PC-9 (cell line): ENCODE measurements at regions of chr7 and their contacts with region 1.

Region 1: GRCh38 chr7:74094224-74095101 is 10.9 kb downstream of the LIMK1 start:
- DNase-seq: peak; percentile 92 to 94
- H3K4me3 ChIP-seq: peak overlapping the region; percentile 41; the same call in 1 of the 2 replicates
- H3K27ac ChIP-seq: peak overlapping the region; percentile 78
- H3K4me1 ChIP-seq: peaks cover 38% of the 10 kb centered on the region
- H3K27me3 ChIP-seq: no peaks in the 10 kb centered on the region
- CTCF ChIP-seq: no peak

Region 2: GRCh38 chr7:74059681-74060578 is 34.5 kb before region 1 on chr7:
- CTCF ChIA-PET with region 1: no interaction called
- POLR2A ChIA-PET with region 1: interaction called, 12 read pairs
- intact Hi-C with region 1: no loop called
- DNase-seq: peak; percentile 76 to 95
- H3K4me3 ChIP-seq: no peak overlapping the region
- H3K27ac ChIP-seq: no peak overlapping the region
- H3K4me1 ChIP-seq: peaks cover 17% of the 10 kb centered on the region
- H3K27me3 ChIP-seq: peaks cover 5% of the 10 kb centered on the region; the same call in 1 of the 2 replicates
- CTCF ChIP-seq: no peak

Region 3: DNA sequence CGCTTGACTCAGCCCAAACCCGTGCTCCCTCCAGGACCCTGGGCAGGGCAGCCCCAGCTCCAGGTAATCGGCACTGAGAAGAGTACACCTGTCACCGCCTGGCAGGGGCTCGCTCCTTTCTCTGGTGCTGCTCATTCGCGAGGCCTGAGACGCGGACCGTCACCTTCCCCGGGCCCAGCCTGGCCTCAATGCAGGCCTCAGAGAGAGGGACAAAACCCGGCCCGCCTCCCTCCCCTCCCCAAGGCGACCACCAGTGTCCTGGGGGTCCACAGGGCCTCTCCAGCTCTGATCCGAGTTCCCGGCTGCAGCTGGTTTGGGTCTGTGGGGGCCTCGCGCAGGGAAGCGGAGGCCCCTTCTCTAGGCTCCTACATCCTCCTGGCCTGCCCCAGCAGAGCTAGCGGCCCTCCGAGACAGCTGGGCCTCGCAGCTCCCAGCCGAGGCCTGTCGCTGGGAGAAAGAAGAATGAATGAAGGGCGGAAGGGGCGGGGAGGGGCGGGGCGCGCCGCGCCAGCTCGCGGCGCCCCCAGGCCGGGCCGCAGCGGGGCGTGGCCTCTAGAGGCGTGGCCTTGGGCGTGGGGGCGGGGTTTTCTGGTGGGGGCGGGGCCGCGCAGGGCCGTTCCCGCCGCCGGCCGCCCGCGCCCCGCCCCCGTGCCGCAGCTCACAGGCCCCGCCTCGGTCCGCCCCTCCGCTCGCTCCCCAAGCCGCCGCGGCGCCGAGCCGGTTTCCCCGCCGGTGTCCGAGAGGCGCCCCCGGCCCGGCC is 11.2 kb before region 1 on chr7 and contains the start of gene LIMK1:
- CTCF ChIA-PET with region 1: no interaction called
- POLR2A ChIA-PET with region 1: interaction called, 3 read pairs
- intact Hi-C with region 1: loop called (anchors 1 kb)
- DNase-seq: peak in 1 of 2 experiments; percentile 89
- H3K4me3 ChIP-seq: peak within 1 kb of the TSS; percentile 97
- H3K27ac ChIP-seq: peak within 1 kb of the TSS; percentile 62
- H3K4me1 ChIP-seq: peaks cover 32% of the 10 kb centered on the region
- H3K27me3 ChIP-seq: no peaks in the 10 kb centered on the region
- CTCF ChIP-seq: no peak
- total RNA-seq, gene LIMK1: 128 and 148 TPM in 2 replicates

Region 4: DNA sequence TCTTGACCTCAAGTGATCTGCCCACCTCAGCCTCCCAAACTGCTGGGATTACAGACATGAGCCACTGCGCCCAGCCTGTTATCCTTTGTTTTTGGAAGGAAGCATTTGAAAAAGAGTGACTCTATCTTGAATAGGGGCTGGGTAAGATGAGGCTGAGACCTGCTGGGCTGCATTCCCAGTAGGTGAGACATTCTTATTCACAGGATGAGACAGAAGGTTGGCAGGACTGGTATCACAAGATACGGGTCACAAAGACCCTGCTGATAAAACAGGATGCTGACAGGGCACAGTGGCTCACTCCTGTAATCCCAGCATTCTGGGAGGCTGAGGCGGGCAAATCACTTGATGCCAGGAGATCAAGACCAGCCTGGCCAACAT is 39.2 kb after region 1 on chr7:
- CTCF ChIA-PET with region 1: no interaction called
- POLR2A ChIA-PET with region 1: interaction called, 8 read pairs
- intact Hi-C with region 1: loop called (anchors 5 kb)
- DNase-seq: peak; percentile 92 to 97
- H3K4me3 ChIP-seq: peak overlapping the region; percentile 21; the same call in 1 of the 2 replicates
- H3K27ac ChIP-seq: peak overlapping the region; percentile 94
- H3K4me1 ChIP-seq: peaks cover 28% of the 10 kb centered on the region
- H3K27me3 ChIP-seq: no peaks in the 10 kb centered on the region
- CTCF ChIP-seq: no peak

Region 5: GRCh38 chr7:74141705-74142104 is 47.2 kb after region 1 on chr7:
- CTCF ChIA-PET with region 1: no interaction called
- POLR2A ChIA-PET with region 1: no interaction called
- intact Hi-C with region 1: loop called (anchors 1 kb)
- DNase-seq: peak; percentile 38 to 89
- H3K4me3 ChIP-seq: peak overlapping the region; percentile 20; the same call in 1 of the 2 replicates
- H3K27ac ChIP-seq: peak overlapping the region; percentile 100
- H3K4me1 ChIP-seq: peaks cover 30% of the 10 kb centered on the region
- H3K27me3 ChIP-seq: no peaks in the 10 kb centered on the region
- CTCF ChIP-seq: no peak

Region 6: GRCh38 chr7:74153758-74154157 is 59.3 kb after region 1 on chr7:
- CTCF ChIA-PET with region 1: no interaction called
- POLR2A ChIA-PET with region 1: no interaction called
- intact Hi-C with region 1: no loop called
- DNase-seq: peak; percentile 68 to 77
- H3K4me3 ChIP-seq: no peak overlapping the region
- H3K27ac ChIP-seq: peak overlapping the region; percentile 37; the same call in 1 of the 2 replicates
- H3K4me1 ChIP-seq: peaks cover 15% of the 10 kb centered on the region
- H3K27me3 ChIP-seq: no peaks in the 10 kb centered on the region
- CTCF ChIP-seq: no peak